Activated T-helper 1 cell treated with anti-CD3 and anti-CD28 coated beads, Interleukin-12 subunit alpha, Interleukin-12 subunit beta, Interleukin-2, Interleukin-4 antibody, amounts not matched to agents 30 ng/mL and 10 ng/mL and 1 ng/mL, durations not matched to agents 14 hours and 24 hours and 36 hours (primary cell): ENCODE measurements at regions of chr7 and their contacts with region 1.

Region 1: GRCh38 chr7:29239638-29240037 is 45.1 kb downstream of the CHN2 start:
- DNase-seq: no peak
- H3K4me3 Mint-ChIP-seq: no peak overlapping the region
- H3K27ac Mint-ChIP-seq: no peak overlapping the region
- H3K4me1 Mint-ChIP-seq: peaks cover 13% of the 10 kb centered on the region
- H3K27me3 Mint-ChIP-seq: peaks cover 28% of the 10 kb centered on the region

Region 2: DNA sequence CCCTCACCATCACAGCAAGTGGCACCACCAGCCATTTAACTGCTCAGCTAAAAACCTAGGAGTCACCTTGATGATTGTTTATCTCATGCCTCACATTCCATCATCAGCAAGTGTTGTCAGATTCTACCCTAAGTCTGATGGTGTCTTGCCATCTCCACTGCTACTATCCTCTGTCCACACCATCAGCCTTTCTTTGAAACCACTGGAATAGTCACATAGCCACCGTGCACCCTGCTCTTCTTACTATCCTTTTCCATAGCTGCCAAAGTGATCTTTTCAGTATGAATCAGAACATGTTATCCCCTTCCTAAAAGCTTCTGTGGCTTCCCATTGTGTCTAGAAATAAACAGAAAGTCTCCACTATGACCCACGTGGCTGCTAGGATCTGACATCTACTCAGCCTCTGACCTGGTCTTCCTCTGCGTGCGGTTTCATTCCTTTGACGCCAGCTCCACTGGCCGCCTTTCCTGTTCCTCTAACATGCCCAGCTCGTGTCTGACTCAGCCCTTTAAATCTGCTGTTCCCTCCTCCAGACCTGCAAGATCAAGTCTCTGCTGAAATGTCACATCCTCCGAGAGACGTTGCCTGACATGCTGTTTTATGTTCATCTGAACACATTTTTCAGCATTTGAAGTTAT is 61.6 kb before region 1 on chr7:
- intact Hi-C with region 1: no loop called
- DNase-seq: no peak
- H3K4me3 Mint-ChIP-seq: no peak overlapping the region
- H3K27ac Mint-ChIP-seq: no peak overlapping the region
- H3K4me1 Mint-ChIP-seq: peaks cover 9% of the 10 kb centered on the region
- H3K27me3 Mint-ChIP-seq: peaks cover 5% of the 10 kb centered on the region

Region 3: GRCh38 chr7:29274146-29275017 is 34.7 kb after region 1 on chr7:
- intact Hi-C with region 1: loop called (anchors 2 kb)
- DNase-seq: no peak
- H3K4me3 Mint-ChIP-seq: no peak overlapping the region
- H3K27ac Mint-ChIP-seq: no peak overlapping the region
- H3K4me1 Mint-ChIP-seq: peaks cover 17% of the 10 kb centered on the region
- H3K27me3 Mint-ChIP-seq: peaks cover 17% of the 10 kb centered on the region